PC-3 (cell line): ENCODE measurements at regions of chr1 and their contacts with region 1.

Region 1: DNA sequence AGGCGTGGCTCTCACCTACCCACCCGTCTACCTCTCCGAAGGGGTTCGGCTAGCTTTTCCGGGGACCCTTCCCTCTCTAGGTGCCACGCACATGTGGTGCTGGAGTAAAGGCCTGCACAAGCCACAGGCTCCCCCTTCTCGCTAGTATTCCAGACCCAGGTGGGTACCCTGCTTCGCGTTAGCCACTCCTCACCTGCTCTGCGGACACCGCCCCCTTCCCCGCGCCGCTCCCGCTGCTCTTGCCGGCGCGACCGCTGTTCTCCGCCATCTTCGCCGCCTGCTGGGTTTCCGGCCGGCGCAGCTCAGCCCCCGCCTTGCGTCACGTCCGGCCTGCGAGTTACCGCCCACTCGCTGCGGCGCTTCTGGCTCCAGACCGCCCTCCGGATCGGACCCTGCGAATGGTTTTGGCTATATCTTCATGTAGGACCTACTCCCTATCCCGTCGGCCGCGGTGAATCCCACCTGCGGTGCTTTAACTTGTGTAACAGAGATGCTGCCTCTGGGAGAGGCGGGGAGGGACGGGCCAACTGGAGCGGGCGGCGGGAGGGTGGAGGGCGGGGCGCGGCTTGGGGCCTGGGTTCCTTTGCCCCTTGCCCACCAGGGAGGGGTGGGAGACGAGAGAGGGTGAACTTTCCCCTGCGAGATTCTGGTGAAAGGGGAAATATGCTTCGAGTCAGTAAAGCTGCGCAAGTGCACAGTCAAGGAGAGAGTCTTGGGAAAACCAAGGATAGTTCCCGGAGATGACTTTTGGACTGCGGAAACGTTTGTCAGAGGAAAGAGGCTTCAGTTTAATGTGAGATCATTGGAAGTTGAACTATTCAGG is at the starts of genes NIT1 and PFDN2:
- DNase-seq: peak; percentile 90
- ATAC-seq: peak; percentile 71
- H3K4me3 ChIP-seq: peak within 1 kb of the TSS; percentile 85
- H3K27ac ChIP-seq: peak within 1 kb of the TSS; percentile 77
- H3K4me1 ChIP-seq: peaks cover 54% of the 10 kb centered on the region
- H3K27me3 ChIP-seq: no peaks in the 10 kb centered on the region
- CTCF ChIP-seq: no peak
- total RNA-seq, gene NIT1: 18.1 and 27.0 TPM in 2 replicates
- total RNA-seq, gene PFDN2: 174 and 197 TPM in 2 replicates

Region 2: DNA sequence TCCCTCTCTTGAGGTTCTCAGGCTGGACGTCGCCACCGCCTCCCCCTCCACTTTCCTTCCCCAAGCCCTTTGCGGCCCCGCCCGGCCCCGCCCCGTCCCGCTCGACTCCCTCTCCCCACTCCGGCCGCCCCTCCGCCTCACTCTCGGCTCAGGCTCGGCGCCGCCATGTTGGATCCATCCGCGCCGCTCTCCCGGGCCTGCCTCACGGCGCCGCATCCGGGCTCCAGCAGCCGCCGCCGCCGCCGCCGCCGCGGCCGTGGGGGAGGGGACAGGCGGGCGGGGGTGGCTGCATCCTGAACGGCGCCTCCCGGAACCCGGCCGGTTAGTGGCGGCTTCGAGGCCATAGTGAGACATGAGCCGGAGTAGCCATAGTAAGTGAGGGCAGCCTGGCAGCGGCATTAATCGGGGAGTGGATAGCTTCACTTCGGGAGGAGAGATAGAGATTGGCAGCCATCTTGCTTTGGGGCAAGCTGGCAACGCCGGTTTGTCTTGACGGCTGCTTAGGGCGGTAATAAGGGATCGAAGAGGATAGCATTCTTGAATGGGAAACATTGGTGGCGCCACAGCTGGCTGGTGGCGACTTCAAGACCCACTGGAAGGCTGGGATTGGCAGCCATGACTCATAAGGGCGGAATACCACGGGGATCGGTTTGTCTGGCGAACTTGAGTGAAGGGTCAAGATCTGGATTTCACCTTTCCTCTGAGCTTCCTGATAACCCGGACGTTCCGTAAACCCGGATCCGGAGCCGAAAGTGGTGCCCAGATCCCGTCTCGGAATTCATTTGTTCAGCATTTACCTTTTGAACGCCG is 14.6 kb after region 1 on chr1 and contains the start of gene DEDD:
- CTCF ChIA-PET with region 1: no interaction called
- POLR2A ChIA-PET with region 1: interaction called, 6 read pairs
- intact Hi-C with region 1: loop called (anchors 1 kb)
- DNase-seq: peak; percentile 97
- ATAC-seq: peak; percentile 84
- H3K4me3 ChIP-seq: peak within 1 kb of the TSS; percentile 90
- H3K27ac ChIP-seq: peak within 1 kb of the TSS; percentile 91
- H3K4me1 ChIP-seq: peaks cover 18% of the 10 kb centered on the region
- H3K27me3 ChIP-seq: no peaks in the 10 kb centered on the region
- CTCF ChIP-seq: 0 out of 2 replicates have a peak, but pooled peaks have one; percentile 39
- total RNA-seq, gene DEDD: 23.4 and 39.2 TPM in 2 replicates

Region 3: GRCh38 chr1:161159087-161159912 is 41.3 kb after region 1 on chr1 and contains the start of gene USP21:
- CTCF ChIA-PET with region 1: no interaction called
- POLR2A ChIA-PET with region 1: interaction called, 3 read pairs
- intact Hi-C with region 1: loop called (anchors 2 kb)
- DNase-seq: peak; percentile 92
- ATAC-seq: peak; percentile 85
- H3K4me3 ChIP-seq: peak within 1 kb of the TSS; percentile 96
- H3K27ac ChIP-seq: peak within 1 kb of the TSS; percentile 39
- H3K4me1 ChIP-seq: peaks cover 37% of the 10 kb centered on the region
- H3K27me3 ChIP-seq: no peaks in the 10 kb centered on the region
- CTCF ChIP-seq: peak; percentile 53
- total RNA-seq, gene USP21: 20.6 and 24.4 TPM in 2 replicates